Activated CD8-positive, alpha-beta T cell treated with anti-CD3 and anti-CD28 coated beads, Interleukin-2, amount 10 ng/mL, durations not matched to agents 7 days and 5 days (primary cell): ENCODE measurements at regions of chr9 and their contacts with region 1.

Region 1: GRCh38 chr9:93003552-93004407 is 54.7 kb upstream of the SUSD3 start:
- DNase-seq: peak; percentile 76
- ATAC-seq: peak; percentile 88
- H3K4me3 Mint-ChIP-seq: no peak overlapping the region
- H3K27ac Mint-ChIP-seq: peak overlapping the region; percentile 83
- H3K4me1 Mint-ChIP-seq: peaks cover 46% of the 10 kb centered on the region
- H3K27me3 Mint-ChIP-seq: no peaks in the 10 kb centered on the region

Region 2: GRCh38 chr9:92795598-92796336 is 208.0 kb before region 1 on chr9:
- CTCF ChIA-PET with region 1: no interaction called
- POLR2A ChIA-PET with region 1: no interaction called
- DNase-seq: no peak
- ATAC-seq: no peak
- H3K4me3 Mint-ChIP-seq: no peak overlapping the region
- H3K27ac Mint-ChIP-seq: no peak overlapping the region
- H3K4me1 Mint-ChIP-seq: peaks cover 5% of the 10 kb centered on the region
- H3K27me3 Mint-ChIP-seq: peaks cover 27% of the 10 kb centered on the region

Region 3: DNA sequence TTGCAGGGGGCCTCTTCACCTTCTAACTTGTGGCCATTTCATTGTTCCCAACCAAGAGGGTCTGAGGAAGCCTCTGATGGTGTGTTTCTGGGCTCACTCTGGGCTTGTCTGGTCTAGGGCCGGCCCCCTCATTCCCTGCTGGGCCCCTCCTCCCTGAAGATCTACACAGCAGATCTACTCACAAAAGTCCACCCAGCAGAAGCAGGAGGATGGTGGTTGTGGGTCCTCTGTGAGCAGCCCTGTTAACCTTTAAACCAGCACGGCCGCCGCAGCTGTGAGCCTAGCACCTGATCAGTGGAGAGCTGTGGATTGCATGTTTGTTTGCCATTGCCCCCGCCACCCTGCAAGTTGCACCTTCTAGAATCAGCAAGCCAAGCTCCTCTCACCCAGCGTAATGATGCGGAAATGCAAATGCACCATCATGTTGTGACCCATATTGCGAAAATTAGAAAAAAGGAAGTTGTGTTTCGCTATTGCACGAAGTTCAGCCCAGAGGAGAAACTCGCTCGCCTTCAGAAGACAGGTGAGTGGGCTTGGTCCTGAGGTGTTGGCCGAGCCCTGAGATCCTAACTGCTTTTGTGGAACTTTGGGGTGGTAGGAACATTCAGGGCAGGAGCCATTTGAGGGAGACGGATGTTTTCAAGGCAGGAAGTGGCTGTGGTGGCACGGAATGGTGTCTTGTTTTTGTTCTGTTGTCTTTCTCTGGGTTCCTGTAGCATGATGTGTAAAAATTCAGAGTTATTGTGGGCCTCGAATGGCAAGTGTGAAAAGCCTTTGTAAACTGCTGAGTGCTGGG is 39.8 kb before region 1 on chr9:
- CTCF ChIA-PET with region 1: interaction called, 34 read pairs
- POLR2A ChIA-PET with region 1: interaction called, 16 read pairs
- DNase-seq: peak; percentile 89
- ATAC-seq: peak; percentile 73
- H3K4me3 Mint-ChIP-seq: peak overlapping the region; percentile 91
- H3K27ac Mint-ChIP-seq: peak overlapping the region; percentile 100
- H3K4me1 Mint-ChIP-seq: peaks cover 58% of the 10 kb centered on the region
- H3K27me3 Mint-ChIP-seq: no peaks in the 10 kb centered on the region

Region 4: DNA sequence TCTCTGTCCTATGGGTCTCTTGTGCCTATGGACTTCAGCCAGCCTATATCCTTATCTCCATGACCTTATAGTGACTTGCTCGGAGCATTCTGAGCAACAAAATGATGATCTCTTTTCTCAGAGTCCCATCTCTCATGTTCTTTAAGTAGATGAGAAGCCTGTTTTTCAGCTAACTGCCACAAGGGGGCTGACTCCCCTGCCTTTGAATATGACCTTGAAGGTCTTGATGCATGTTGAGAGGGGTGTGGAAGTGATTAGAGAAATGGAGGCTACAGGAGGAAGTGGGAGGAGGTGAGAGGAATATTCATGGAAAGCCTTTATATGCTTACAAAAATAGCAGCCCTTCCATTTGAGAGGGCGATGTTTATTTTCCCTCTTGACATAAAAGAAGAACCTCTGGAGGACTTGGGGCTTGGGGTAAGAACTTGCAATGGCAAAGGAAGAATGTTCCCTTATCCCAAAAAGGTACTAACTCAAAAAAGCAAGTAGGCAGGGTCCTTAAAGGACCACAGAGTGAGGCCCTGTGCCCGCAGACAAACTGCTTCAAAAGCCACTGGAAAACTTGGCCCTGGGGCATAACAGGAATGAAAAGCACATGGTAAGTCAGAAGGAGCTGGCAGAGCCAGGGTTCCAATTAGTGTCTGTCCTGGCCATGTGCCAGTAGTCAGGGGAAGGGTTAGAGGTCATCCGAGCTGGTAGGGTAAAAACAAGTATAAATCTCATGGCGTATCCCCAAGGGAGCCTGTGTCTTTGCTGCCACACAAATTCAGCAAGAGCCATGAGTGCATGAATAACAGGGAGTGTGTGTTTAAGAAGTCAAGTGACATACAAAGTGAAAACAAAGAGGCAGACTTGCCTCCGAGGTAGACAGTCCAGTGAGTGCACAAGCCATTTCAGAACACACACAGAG is 17.3 kb before region 1 on chr9:
- CTCF ChIA-PET with region 1: interaction called, 31 read pairs
- POLR2A ChIA-PET with region 1: no interaction called
- DNase-seq: peak; percentile 54
- ATAC-seq: peak; percentile 19
- H3K4me3 Mint-ChIP-seq: no peak overlapping the region
- H3K27ac Mint-ChIP-seq: peak overlapping the region; percentile 78
- H3K4me1 Mint-ChIP-seq: peaks cover 68% of the 10 kb centered on the region
- H3K27me3 Mint-ChIP-seq: no peaks in the 10 kb centered on the region

Region 5: DNA sequence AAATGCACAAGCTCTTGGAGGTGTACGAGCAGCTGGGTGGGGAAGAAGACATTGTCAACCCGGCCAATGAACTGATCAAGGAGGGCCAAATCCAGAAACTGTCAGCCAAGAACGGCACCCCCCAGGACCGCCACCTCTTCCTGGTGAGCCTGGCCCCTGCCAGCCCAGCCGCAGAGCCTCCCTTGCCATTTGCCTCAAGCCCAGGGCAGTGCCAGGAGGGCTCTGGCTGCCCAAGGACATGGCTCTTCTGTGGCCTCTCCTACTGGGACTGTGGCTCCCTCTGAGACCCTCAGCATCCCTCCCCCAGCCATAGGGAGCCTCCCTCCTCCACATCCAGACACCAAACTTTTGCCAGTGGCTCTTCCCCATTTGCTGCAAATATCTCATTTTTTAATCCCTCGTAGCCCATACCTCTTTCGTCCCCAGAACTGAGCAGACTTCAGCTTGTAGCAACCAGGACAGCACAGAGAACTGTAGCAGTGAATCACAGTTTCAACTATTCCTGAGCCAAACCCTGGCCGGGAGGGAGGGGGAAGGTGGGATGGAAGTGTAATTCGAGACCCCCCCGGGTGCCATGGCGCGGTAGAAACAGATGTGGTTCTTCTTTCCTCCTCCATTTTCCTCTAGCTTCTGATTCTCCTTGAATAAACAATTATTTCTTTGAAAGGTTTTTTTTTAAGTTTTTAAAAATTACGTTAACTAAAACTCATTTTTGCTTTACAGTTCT is 10.2 kb after region 1 on chr9:
- CTCF ChIA-PET with region 1: interaction called, 42 read pairs
- POLR2A ChIA-PET with region 1: interaction called, 3 read pairs
- DNase-seq: peak; percentile 12
- ATAC-seq: no peak
- H3K4me3 Mint-ChIP-seq: no peak overlapping the region
- H3K27ac Mint-ChIP-seq: peak overlapping the region; percentile 31
- H3K4me1 Mint-ChIP-seq: peaks cover 16% of the 10 kb centered on the region
- H3K27me3 Mint-ChIP-seq: no peaks in the 10 kb centered on the region

Region 6: DNA sequence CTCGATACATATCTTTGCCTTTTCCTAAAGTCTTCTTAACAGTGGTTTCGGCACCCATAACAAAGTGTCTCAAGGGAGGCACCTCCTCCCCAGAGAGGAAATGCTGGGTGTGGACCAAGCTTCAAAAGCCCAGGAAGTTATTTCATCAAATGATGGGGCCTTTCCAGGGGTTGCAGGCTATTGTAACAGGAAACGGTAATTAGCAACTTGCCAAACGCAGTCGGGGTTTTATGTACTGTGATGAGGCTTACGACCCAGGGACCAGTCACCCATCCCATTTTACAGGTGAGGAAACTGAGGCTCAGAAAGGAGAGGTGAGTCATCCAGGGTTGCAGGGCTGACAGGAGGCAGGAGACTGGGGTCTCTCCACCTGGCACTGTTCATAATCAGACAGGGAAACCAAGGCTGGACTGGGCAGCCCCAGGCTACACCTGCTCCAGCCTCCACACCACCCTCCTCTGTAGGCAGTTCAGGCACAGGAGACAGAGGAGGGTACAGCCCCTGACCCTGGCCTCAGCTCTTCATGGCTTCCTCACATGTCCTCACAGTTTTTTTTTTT is 24.7 kb after region 1 on chr9:
- CTCF ChIA-PET with region 1: interaction called, 35 read pairs
- POLR2A ChIA-PET with region 1: interaction called, 4 read pairs
- DNase-seq: peak; percentile 83
- ATAC-seq: peak; percentile 85
- H3K4me3 Mint-ChIP-seq: peak overlapping the region; percentile 71
- H3K27ac Mint-ChIP-seq: peak overlapping the region; percentile 92
- H3K4me1 Mint-ChIP-seq: peaks cover 79% of the 10 kb centered on the region
- H3K27me3 Mint-ChIP-seq: no peaks in the 10 kb centered on the region

Region 7: DNA sequence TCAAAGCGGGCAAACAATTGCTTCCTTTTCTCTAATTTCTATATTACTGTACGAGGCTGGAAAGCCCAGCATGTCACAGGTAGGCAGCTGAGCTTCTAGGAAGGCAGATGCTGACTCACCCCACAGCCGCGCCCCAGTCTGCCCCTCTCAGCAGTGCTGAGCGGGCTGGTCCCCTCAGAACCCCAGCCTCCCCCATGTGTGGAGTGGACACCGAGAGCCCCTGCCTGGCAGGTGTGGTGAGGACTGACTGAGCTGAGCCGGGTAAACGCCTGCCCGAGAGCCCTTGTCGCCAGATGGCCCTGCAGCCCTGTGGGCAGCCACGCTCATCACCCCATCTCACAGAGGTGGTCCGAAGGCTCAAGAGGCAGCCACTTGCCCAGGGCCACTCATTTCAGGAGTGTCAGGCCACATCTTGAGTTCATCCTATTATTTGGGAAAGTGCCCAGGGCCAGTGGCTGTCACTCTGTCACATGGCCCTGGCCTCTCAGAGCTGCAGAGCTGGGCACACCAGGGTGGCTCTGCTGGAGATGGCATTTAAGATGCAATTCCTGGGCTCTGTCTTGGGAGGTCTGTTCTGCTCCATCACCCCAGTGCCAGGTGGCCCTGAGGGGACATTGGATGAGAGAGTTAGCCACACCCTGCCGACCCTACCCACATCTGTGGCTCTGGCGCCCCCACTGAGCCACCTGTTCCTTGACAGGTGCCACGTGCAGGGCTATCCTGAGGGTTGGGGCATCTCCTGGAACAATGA is 104.7 kb after region 1 on chr9:
- CTCF ChIA-PET with region 1: interaction called, 31 read pairs
- POLR2A ChIA-PET with region 1: interaction called, 3 read pairs
- DNase-seq: no peak
- ATAC-seq: peak; percentile 48
- H3K4me3 Mint-ChIP-seq: no peak overlapping the region
- H3K27ac Mint-ChIP-seq: no peak overlapping the region
- H3K4me1 Mint-ChIP-seq: peaks cover 51% of the 10 kb centered on the region
- H3K27me3 Mint-ChIP-seq: no peaks in the 10 kb centered on the region